ENCODE measurements at regions of chr2 and their contacts with region 1.

Region 1: GRCh38 chr2:61538200-61538919 is at the start of gene XPO1:
- ATAC-seq: peak; percentile 81 to 92 (median 90)
- H3K4me3 ChIP-seq: peak within 1 kb of the TSS; percentile 47 to 93 (median 84)
- H3K27ac ChIP-seq: peak within 1 kb of the TSS; percentile 80 to 97
- H3K4me1 ChIP-seq: peaks cover 0 to 5% of the 10 kb centered on the region in 2 donors
- total RNA-seq, gene XPO1: 66.6 to 253 (median 172) TPM

Region 2: GRCh38 chr2:61645911-61646310 is 107.6 kb after region 1 on chr2:
- in situ Hi-C with region 1: loop called in 1 of 9 experiments (anchors 25 kb)
- ATAC-seq: peak in 2 of 8 experiments; percentile 42 to 76
- H3K4me3 ChIP-seq: no peak overlapping the region
- H3K27ac ChIP-seq: no peak overlapping the region
- H3K4me1 ChIP-seq: no peaks in the 10 kb centered on the region

Measured in motor neuron (in vitro differentiated cells).